ENCODE measurements at regions of chr14 and their contacts with region 1.

Region 1: GRCh38 chr14:36661756-36662498 is at the start of gene PAX9:
- DNase-seq: peak; percentile 75 to 89
- H3K4me3 ChIP-seq: peak within 1 kb of the TSS; percentile 85
- H3K27ac ChIP-seq: no peak within 1 kb of the TSS
- H3K4me1 ChIP-seq: no peaks in the 10 kb centered on the region
- H3K27me3 ChIP-seq: no peaks in the 10 kb centered on the region
- CTCF ChIP-seq: no peak
- total RNA-seq, gene PAX9: 7.6 and 8.5 TPM in 2 replicates

Region 2: GRCh38 chr14:36418937-36419336 is 243.0 kb before region 1 on chr14:
- CTCF ChIA-PET with region 1: no interaction called
- POLR2A ChIA-PET with region 1: no interaction called
- intact Hi-C with region 1: no loop called
- DNase-seq: no peak
- H3K4me3 ChIP-seq: no peak overlapping the region
- H3K27ac ChIP-seq: no peak overlapping the region
- H3K4me1 ChIP-seq: no peaks in the 10 kb centered on the region
- H3K27me3 ChIP-seq: no peaks in the 10 kb centered on the region
- CTCF ChIP-seq: no peak

Region 3: GRCh38 chr14:36585100-36585499 is 76.8 kb before region 1 on chr14:
- CTCF ChIA-PET with region 1: no interaction called
- POLR2A ChIA-PET with region 1: no interaction called
- intact Hi-C with region 1: no loop called
- DNase-seq: no peak
- H3K4me3 ChIP-seq: no peak overlapping the region
- H3K27ac ChIP-seq: no peak overlapping the region
- H3K4me1 ChIP-seq: no peaks in the 10 kb centered on the region
- H3K27me3 ChIP-seq: no peaks in the 10 kb centered on the region
- CTCF ChIP-seq: no peak

Region 4: GRCh38 chr14:36690301-36691033 is 28.5 kb after region 1 on chr14:
- CTCF ChIA-PET with region 1: no interaction called
- POLR2A ChIA-PET with region 1: no interaction called
- intact Hi-C with region 1: no loop called
- DNase-seq: peak; percentile 16 to 61
- H3K4me3 ChIP-seq: no peak overlapping the region
- H3K27ac ChIP-seq: no peak overlapping the region
- H3K4me1 ChIP-seq: no peaks in the 10 kb centered on the region; the same call in 1 of the 2 replicates
- H3K27me3 ChIP-seq: no peaks in the 10 kb centered on the region
- CTCF ChIP-seq: no peak

Region 5: GRCh38 chr14:36767603-36768281 is 105.8 kb after region 1 on chr14:
- CTCF ChIA-PET with region 1: no interaction called
- POLR2A ChIA-PET with region 1: no interaction called
- intact Hi-C with region 1: loop called (anchors 2 kb)
- DNase-seq: peak; percentile 55 to 91
- H3K4me3 ChIP-seq: 0 out of 2 replicates have a peak overlapping the region, but pooled peaks have one; percentile 7
- H3K27ac ChIP-seq: peak overlapping the region; percentile 75
- H3K4me1 ChIP-seq: peaks cover 52% of the 10 kb centered on the region
- H3K27me3 ChIP-seq: no peaks in the 10 kb centered on the region
- CTCF ChIP-seq: no peak

Measured in PC-9 (cell line).